Activated naive CD4-positive, alpha-beta T cell treated with anti-CD3 and anti-CD28 coated beads for 36 hours (primary cell): ENCODE measurements at regions of chr1 and their contacts with region 1.

Region 1: GRCh38 chr1:154499446-154499845 is 2.6 kb upstream of the TDRD10 start:
- DNase-seq: peak; percentile 38
- H3K4me3 Mint-ChIP-seq: no peak overlapping the region
- H3K27ac Mint-ChIP-seq: no peak overlapping the region
- H3K4me1 Mint-ChIP-seq: peaks cover 40% of the 10 kb centered on the region
- H3K27me3 Mint-ChIP-seq: peaks cover 35% of the 10 kb centered on the region

Region 2: DNA sequence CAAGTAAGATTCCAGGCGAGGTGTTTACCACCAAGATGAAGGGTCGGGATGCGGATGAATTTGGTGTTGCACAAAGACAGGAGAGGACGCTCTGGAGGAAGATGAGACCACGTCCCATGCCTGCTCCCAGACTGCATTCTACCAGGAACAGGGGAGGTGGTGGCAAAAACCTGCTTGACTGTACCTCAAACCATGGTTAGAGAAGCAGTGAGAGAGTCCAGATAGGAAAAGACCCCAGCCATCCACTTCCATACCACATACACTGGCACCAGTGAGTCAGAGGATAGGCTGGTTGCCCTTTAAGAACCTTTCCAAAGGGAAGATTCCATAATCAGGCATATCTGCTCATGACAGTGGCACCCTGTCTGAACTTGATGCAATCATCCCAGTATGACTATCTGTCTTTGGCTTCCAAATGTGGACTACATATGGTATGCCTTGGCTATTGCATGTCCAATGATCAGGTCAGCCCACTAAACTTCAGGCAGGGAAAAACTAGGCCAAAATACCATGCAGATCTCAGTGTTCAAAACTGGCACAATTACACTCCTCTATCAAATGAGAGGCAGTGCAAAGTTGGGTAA is 800.4 kb before region 1 on chr1:
- CTCF ChIA-PET with region 1: no interaction called
- intact Hi-C with region 1: no loop called
- DNase-seq: no peak
- H3K4me3 Mint-ChIP-seq: no peak overlapping the region
- H3K27ac Mint-ChIP-seq: no peak overlapping the region
- H3K4me1 Mint-ChIP-seq: peaks cover 3% of the 10 kb centered on the region
- H3K27me3 Mint-ChIP-seq: no peaks in the 10 kb centered on the region

Region 3: DNA sequence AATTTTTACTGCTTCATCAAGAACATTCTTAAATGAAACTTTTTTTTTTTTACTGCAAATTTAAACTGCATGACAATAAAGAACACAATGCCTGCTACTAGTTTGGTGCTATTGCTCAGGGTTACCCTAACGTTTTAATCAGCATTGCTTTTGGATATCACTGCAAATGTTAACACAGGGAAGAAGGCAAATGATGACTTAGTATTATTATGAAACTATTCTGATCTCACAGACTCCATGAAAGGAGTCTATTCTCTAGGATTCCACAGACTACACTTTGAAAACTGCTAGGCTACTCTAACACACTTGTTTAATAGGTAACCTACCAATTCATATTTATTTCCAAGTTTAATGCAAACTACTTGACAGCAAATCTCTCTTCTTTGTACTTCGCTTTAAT is 626.5 kb before region 1 on chr1:
- CTCF ChIA-PET with region 1: no interaction called
- intact Hi-C with region 1: no loop called
- DNase-seq: no peak
- H3K4me3 Mint-ChIP-seq: no peak overlapping the region
- H3K27ac Mint-ChIP-seq: no peak overlapping the region
- H3K4me1 Mint-ChIP-seq: peaks cover 34% of the 10 kb centered on the region
- H3K27me3 Mint-ChIP-seq: no peaks in the 10 kb centered on the region

Region 4: GRCh38 chr1:154304664-154305337 is 194.6 kb before region 1 on chr1:
- CTCF ChIA-PET with region 1: no interaction called
- intact Hi-C with region 1: loop called (anchors 1 kb)
- DNase-seq: peak; percentile 74
- H3K4me3 Mint-ChIP-seq: no peak overlapping the region
- H3K27ac Mint-ChIP-seq: no peak overlapping the region
- H3K4me1 Mint-ChIP-seq: peaks cover 15% of the 10 kb centered on the region
- H3K27me3 Mint-ChIP-seq: no peaks in the 10 kb centered on the region

Region 5: GRCh38 chr1:154463512-154463990 is 35.9 kb before region 1 on chr1:
- CTCF ChIA-PET with region 1: no interaction called
- intact Hi-C with region 1: loop called (anchors 2 kb)
- DNase-seq: peak; percentile 89
- H3K4me3 Mint-ChIP-seq: no peak overlapping the region
- H3K27ac Mint-ChIP-seq: peak overlapping the region; percentile 78
- H3K4me1 Mint-ChIP-seq: peaks cover 73% of the 10 kb centered on the region
- H3K27me3 Mint-ChIP-seq: no peaks in the 10 kb centered on the region